ENCODE measurements at regions of chr7 and their contacts with region 1.

Region 1: DNA sequence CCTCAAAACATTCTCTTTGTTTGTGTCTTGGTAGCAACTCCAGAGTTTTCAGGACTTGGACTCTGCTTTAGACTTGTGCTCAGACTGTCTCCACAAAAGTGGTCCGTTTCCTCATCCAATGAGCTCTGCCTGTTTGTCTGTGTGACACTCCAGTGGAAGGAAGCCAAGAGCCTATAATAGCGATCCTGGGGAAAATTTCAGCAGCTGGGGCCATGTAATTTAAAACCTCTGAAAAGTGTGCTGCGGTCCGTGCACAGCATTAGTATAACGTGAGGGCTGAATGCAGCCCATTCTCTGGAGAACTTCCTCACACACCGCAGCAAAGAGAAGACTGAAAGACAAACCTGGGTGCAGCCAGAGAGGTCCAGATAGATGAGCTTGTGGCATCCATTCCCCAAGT is at the start of gene LRRC17:
- DNase-seq: no peak
- H3K4me3 ChIP-seq: peak within 1 kb of the TSS in 1 of 4 donors; percentile 21
- H3K27ac ChIP-seq: peak within 1 kb of the TSS in 2 of 5 donors; percentile 13 to 32
- H3K4me1 ChIP-seq: peaks cover 0 to 12% of the 10 kb centered on the region in 2 donors
- H3K27me3 ChIP-seq: no peaks in the 10 kb centered on the region
- CTCF ChIP-seq: no peak
- POLR2A ChIP-seq: no peak
- total RNA-seq, gene LRRC17: 1.5 to 26.3 (median 3.4) TPM

Region 2: GRCh38 chr7:103065667-103066066 is 152.9 kb after region 1 on chr7:
- intact Hi-C with region 1: loop called in 1 of 2 experiments (anchors 10 kb)
- DNase-seq: peak in 4 of 7 donors; percentile 37 to 58 (median 42)
- H3K4me3 ChIP-seq: no peak overlapping the region
- H3K27ac ChIP-seq: no peak overlapping the region
- H3K4me1 ChIP-seq: no peaks in the 10 kb centered on the region
- H3K27me3 ChIP-seq: no peaks in the 10 kb centered on the region
- CTCF ChIP-seq: peak in 5 of 6 experiments; percentile 12 to 35 (median 29)
- POLR2A ChIP-seq: no peak